Heart right ventricle (tissue), 16 donors: ENCODE measurements at regions of chr15 and their contacts with region 1.

Region 1: DNA sequence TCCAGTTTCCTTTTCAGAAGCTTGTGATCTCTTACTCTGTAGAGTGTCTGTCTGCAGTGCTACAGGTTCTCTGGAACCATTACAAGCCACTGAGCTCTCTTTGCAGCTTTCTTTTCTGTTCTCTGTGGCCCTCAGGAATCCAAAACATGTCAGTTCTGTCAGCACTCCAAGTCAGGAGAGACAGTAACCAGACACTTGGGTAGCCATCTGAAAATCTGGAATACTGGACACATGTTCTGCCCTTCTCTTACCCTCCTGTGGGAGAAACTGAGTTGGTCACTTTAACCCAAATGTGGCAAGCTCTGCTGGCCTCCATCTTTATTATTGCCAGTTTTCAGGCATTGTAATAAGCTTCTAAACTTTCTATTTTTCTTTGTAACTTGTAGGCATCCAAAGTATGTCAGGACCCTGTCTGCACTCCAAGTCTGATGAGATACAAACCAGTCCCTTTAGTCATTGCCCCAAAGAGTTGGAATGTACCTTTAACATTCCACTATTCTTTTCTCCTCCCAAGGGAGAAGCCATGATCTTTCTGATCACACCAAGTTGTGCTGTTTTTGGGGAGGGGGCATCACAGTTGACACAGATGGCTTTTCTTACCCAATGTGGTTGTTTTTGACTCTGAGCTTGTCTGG is 183.7 kb downstream of the DPH6 start:
- DNase-seq: peak in 1 of 2 donors; percentile 44
- ATAC-seq: peak; percentile 69 to 98 (median 84)
- H3K4me3 ChIP-seq: no peak overlapping the region
- H3K27ac ChIP-seq: peak overlapping the region in 8 of 10 donors; percentile 17 to 69 (median 50)
- H3K4me1 ChIP-seq: peaks cover 0 to 4% (median 0%) of the 10 kb centered on the region in 9 donors
- H3K27me3 ChIP-seq: no peaks in the 10 kb centered on the region
- CTCF ChIP-seq: no peak

Region 2: GRCh38 chr15:35289024-35289617 is 73.2 kb before region 1 on chr15:
- intact Hi-C with region 1: no loop called
- DNase-seq: peak in 1 of 2 donors; percentile 20
- ATAC-seq: peak in 4 of 8 donors; percentile 38 to 73 (median 65)
- H3K4me3 ChIP-seq: no peak overlapping the region
- H3K27ac ChIP-seq: no peak overlapping the region
- H3K4me1 ChIP-seq: peaks cover 0 to 4% (median 0%) of the 10 kb centered on the region in 9 donors
- H3K27me3 ChIP-seq: no peaks in the 10 kb centered on the region
- CTCF ChIP-seq: peak in 8 of 9 donors; percentile 28 to 83 (median 76)

Region 3: DNA sequence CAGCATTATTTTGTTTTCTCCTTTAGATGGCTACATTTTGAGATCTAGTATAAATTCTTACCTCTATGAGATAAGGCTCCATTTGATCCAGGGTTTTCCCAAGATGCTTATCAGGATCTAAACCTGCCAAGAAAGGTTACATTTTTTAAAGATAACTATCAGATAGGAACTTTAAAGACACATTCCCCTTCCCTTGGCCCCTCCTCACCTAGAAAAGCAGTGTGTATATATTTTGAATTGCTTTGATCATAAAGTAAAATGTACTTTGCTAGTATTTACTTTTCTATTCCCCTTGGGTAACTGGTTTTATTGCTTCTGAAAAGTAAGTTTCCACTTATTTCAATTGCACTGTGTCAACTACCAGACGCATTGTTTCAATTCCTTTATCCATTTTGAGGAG is 48.5 kb after region 1 on chr15:
- intact Hi-C with region 1: loop called in 1 of 10 experiments (anchors 10 kb)
- DNase-seq: no peak
- ATAC-seq: no peak
- H3K4me3 ChIP-seq: no peak overlapping the region
- H3K27ac ChIP-seq: no peak overlapping the region
- H3K4me1 ChIP-seq: no peaks in the 10 kb centered on the region
- H3K27me3 ChIP-seq: no peaks in the 10 kb centered on the region
- CTCF ChIP-seq: no peak